Heart left ventricle (tissue), 16 donors: ENCODE measurements at regions of chr1 and their contacts with region 1.

Region 1: DNA sequence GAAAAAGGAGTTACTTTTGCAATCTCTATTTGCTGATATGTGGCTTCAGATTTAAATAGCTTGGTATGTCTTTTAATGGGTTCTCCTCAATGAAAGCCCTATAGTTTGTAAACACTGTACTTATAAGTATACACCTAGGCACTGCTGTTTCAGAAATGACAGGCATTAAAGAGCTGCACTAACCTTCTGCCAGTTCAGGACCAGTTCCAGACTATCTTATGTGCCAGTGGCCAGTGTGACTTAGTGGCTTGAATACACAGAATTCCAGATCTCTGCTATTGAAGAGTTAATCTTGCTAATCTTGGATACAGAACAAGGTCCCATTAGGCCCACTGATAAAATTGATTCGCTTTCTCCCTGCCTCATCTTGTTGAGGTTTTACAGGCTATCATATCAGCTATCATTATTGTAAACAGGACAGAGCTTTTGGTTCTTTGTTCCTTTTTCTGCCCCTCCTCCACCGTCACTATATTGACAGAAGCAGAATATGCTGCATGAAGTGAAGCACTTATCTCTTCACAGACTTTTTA is 337.5 kb downstream of the LRRIQ3 start:
- DNase-seq: no peak
- ATAC-seq: no peak
- H3K4me3 ChIP-seq: no peak overlapping the region
- H3K27ac ChIP-seq: no peak overlapping the region
- H3K4me1 ChIP-seq: no peaks in the 10 kb centered on the region
- H3K27me3 ChIP-seq: no peaks in the 10 kb centered on the region
- CTCF ChIP-seq: no peak
- POLR2A ChIP-seq: no peak

Region 2: GRCh38 chr1:73749996-73750395 is 110.5 kb before region 1 on chr1:
- intact Hi-C with region 1: no loop called
- DNase-seq: no peak
- ATAC-seq: no peak
- H3K4me3 ChIP-seq: no peak overlapping the region
- H3K27ac ChIP-seq: no peak overlapping the region
- H3K4me1 ChIP-seq: no peaks in the 10 kb centered on the region
- H3K27me3 ChIP-seq: no peaks in the 10 kb centered on the region
- CTCF ChIP-seq: no peak
- POLR2A ChIP-seq: no peak

Region 3: GRCh38 chr1:73914951-73915350 is 54.5 kb after region 1 on chr1:
- intact Hi-C with region 1: loop called in 1 of 10 experiments (anchors 10 kb)
- DNase-seq: no peak
- ATAC-seq: no peak
- H3K4me3 ChIP-seq: no peak overlapping the region
- H3K27ac ChIP-seq: no peak overlapping the region
- H3K4me1 ChIP-seq: no peaks in the 10 kb centered on the region
- H3K27me3 ChIP-seq: no peaks in the 10 kb centered on the region
- CTCF ChIP-seq: no peak
- POLR2A ChIP-seq: no peak